ENCODE measurements at regions of chr13 and their contacts with region 1.

Region 1: GRCh38 chr13:29508130-29508875 is 87.2 kb downstream of the SLC7A1 start:
- DNase-seq: peak; percentile 70 to 86
- ATAC-seq: peak; percentile 77 to 89 (median 81)
- H3K4me3 ChIP-seq: no peak overlapping the region
- H3K4me3 Mint-ChIP-seq: no peak overlapping the region
- H3K27ac ChIP-seq: no peak overlapping the region
- H3K27ac Mint-ChIP-seq: no peak overlapping the region
- H3K4me1 ChIP-seq: no peaks in the 10 kb centered on the region
- H3K4me1 Mint-ChIP-seq: peaks cover 0 to 8% of the 10 kb centered on the region in 2 donors
- H3K27me3 ChIP-seq: no peaks in the 10 kb centered on the region
- H3K27me3 Mint-ChIP-seq: peaks cover 3 to 14% of the 10 kb centered on the region in 2 donors
- CTCF ChIP-seq: peak; percentile 94

Region 2: DNA sequence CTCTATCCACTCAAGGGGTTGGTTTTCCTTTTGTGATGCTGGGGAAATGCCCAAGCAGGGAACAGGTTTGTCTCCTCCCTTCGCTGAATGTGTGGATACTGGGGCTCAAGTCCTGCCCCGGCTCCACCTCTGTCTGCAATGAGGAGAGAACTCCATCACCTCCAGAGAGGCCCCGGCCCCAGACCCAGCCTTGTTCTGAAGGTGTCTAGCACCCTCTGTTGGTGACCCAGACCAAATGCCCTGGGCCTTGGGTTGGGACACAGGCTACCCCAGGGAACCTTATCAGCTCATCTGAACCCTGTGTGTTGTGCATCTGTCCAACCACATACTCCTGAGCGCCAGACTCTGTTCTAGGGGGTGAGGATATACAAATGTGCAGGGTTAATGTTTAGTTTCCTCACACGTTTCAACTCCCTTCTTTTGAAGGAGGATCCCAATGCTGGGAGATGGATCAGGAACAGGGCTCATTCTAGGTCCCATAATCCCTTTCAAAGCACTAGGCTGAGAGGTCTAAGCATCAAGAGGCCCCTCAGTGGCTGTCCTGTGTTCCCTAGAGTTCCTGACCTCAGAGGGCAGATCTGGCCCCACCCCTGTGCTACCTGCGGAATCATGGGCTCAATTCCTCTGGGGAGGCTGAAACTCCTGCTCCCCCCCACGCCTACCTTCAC is 199.7 kb after region 1 on chr13:
- intact Hi-C with region 1: loop called (anchors 1 kb)
- DNase-seq: peak in 1 of 2 donors; percentile 63
- ATAC-seq: peak; percentile 54 to 72 (median 69)
- H3K4me3 ChIP-seq: no peak overlapping the region
- H3K4me3 Mint-ChIP-seq: no peak overlapping the region
- H3K27ac ChIP-seq: no peak overlapping the region
- H3K27ac Mint-ChIP-seq: no peak overlapping the region
- H3K4me1 ChIP-seq: no peaks in the 10 kb centered on the region
- H3K4me1 Mint-ChIP-seq: no peaks in the 10 kb centered on the region
- H3K27me3 ChIP-seq: peaks cover 1% of the 10 kb centered on the region
- H3K27me3 Mint-ChIP-seq: peaks cover 11 to 15% of the 10 kb centered on the region in 2 donors
- CTCF ChIP-seq: peak; percentile 51

Region 3: DNA sequence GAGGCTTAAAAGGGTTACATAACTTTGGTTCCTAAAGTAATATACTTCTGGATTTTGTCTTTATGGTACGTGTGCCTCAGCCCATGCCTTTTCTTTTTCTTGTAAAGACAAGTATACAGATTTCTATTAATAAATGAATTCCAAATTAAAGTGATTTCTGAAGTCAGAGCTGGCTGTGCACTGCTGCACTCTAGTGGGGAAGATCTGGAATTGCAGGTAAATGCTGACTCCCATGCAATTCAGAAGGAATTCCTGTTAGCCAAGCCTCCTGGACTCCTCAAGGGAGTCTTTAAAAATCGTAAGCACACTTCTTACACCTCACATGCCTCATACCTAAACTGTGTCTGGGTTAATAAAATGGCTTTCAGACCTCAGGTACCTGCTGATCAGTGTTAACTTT is 205.5 kb after region 1 on chr13:
- intact Hi-C with region 1: loop called (anchors 1 kb)
- DNase-seq: peak in 1 of 2 donors; percentile 33
- ATAC-seq: no peak
- H3K4me3 ChIP-seq: no peak overlapping the region
- H3K4me3 Mint-ChIP-seq: no peak overlapping the region
- H3K27ac ChIP-seq: no peak overlapping the region
- H3K27ac Mint-ChIP-seq: no peak overlapping the region
- H3K4me1 ChIP-seq: no peaks in the 10 kb centered on the region
- H3K4me1 Mint-ChIP-seq: no peaks in the 10 kb centered on the region
- H3K27me3 ChIP-seq: no peaks in the 10 kb centered on the region
- H3K27me3 Mint-ChIP-seq: peaks cover 8 to 10% of the 10 kb centered on the region in 2 donors
- CTCF ChIP-seq: peak; percentile 59

Region 4: GRCh38 chr13:29850224-29850898 is 342.1 kb after region 1 on chr13 and contains the start of gene UBL3:
- intact Hi-C with region 1: no loop called
- DNase-seq: peak; percentile 87 to 96
- ATAC-seq: peak; percentile 86 to 96 (median 92)
- H3K4me3 ChIP-seq: peak within 1 kb of the TSS; percentile 95
- H3K4me3 Mint-ChIP-seq: peak within 1 kb of the TSS; percentile 95
- H3K27ac ChIP-seq: peak within 1 kb of the TSS; percentile 99
- H3K27ac Mint-ChIP-seq: peak within 1 kb of the TSS; percentile 96 to 100
- H3K4me1 ChIP-seq: peaks cover 6% of the 10 kb centered on the region
- H3K4me1 Mint-ChIP-seq: peaks cover 40 to 47% of the 10 kb centered on the region in 2 donors
- H3K27me3 ChIP-seq: no peaks in the 10 kb centered on the region
- H3K27me3 Mint-ChIP-seq: peaks cover 0 to 6% of the 10 kb centered on the region in 2 donors
- CTCF ChIP-seq: no peak
- total RNA-seq, gene UBL3: 29.6 to 36.0 (median 31.5) TPM